CD4-positive, alpha-beta memory T cell (primary cell): ENCODE measurements at regions of chr7 and their contacts with region 1.

Region 1: DNA sequence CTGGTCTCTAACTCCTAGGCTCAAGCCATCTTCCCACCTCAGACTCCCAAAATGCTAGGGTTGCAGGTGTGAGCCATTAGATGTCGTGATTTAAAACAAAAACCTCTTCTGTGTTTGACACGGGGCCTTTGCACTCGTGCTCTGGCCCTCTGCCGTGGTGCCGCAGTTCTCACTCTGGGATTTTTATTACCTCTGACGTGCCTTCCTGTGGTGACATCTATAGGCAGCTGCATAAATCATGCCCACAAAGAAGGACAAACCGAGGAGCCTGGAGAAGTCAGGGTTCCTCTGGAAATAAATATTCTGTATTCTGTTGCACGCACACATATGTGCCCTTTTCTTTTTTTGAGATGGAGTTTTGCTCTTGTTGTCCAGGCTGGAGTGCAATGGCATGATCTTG is 25.9 kb upstream of the OCM start:
- DNase-seq: no peak
- H3K4me3 ChIP-seq: no peak overlapping the region
- H3K4me3 Mint-ChIP-seq: no peak overlapping the region
- H3K27ac ChIP-seq: no peak overlapping the region
- H3K27ac Mint-ChIP-seq: peak overlapping the region in 3 of 7 donors; percentile 42 to 61 (median 55)
- H3K4me1 ChIP-seq: peaks cover 11% of the 10 kb centered on the region
- H3K4me1 Mint-ChIP-seq: peaks cover 12 to 30% (median 20%) of the 10 kb centered on the region in 4 donors
- H3K27me3 ChIP-seq: no peaks in the 10 kb centered on the region
- H3K27me3 Mint-ChIP-seq: no peaks in the 10 kb centered on the region

Region 2: DNA sequence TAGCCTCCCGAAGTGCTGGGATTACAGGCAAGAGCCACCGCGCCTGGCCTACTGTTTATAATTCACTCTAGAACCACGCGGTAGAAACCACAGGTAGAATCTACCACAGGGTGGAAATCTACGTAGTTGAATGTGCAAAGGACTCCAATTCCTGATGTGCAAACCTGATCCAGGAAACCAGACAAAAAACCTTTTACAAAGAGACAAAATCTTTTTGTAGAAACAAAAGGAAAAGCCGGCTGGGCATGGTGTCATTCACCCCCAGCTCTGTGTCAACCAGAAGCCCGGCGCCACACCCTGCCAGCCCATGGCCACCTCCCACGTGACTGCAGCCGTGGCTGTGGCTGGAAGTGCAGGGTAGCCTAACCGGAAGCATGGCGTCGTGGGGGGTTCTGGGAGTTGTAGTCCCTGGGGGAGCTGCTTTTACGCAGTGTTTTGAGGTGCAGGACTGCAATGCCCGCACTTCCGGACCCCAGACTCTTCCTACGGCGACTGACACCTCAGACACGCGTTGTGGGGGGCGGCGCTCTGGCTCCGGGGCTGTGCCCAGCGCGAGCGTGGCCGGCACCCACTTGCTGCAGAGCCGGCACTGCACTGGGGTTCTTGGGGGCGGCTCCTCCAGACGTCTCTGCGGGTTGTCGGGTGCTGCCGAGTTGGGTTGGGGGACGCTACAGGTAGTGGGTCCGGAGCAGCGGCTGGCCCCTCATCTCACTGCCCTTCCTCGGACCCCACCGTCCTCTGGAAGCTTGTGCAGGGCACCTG is 31.8 kb before region 1 on chr7:
- CTCF ChIA-PET with region 1: interaction called, 16 read pairs
- POLR2A ChIA-PET with region 1: interaction called, 5 read pairs
- intact Hi-C with region 1: no loop called
- DNase-seq: peak; percentile 98 to 100 (median 99)
- H3K4me3 ChIP-seq: peak overlapping the region; percentile 79 to 88
- H3K4me3 Mint-ChIP-seq: peak overlapping the region; percentile 84 to 95 (median 91)
- H3K27ac ChIP-seq: peak overlapping the region; percentile 79
- H3K27ac Mint-ChIP-seq: peak overlapping the region; percentile 81 to 98 (median 93)
- H3K4me1 ChIP-seq: peaks cover 33% of the 10 kb centered on the region
- H3K4me1 Mint-ChIP-seq: peaks cover 13 to 42% (median 27%) of the 10 kb centered on the region in 4 donors
- H3K27me3 ChIP-seq: no peaks in the 10 kb centered on the region
- H3K27me3 Mint-ChIP-seq: no peaks in the 10 kb centered on the region

Region 3: DNA sequence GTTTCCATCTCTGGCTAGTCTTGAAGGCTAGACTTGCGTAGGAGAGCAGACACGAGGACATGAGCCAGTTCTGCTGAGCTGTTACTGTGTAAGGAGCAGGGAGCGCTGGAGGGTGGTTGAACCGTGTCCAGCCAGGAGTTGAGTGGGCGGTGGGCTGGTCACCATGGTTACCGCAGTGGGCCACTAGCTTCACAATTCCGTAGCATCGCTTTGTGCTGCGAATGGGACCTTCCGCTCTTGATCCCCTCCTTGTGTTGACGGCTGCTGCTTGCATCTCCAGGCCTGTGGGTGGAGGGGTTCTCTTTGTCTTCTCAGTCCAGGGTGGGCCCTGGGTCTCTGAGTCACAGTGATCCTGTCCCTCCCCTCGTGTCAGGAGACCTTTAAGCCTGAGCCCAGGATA is 23.5 kb before region 1 on chr7:
- CTCF ChIA-PET with region 1: interaction called, 20 read pairs
- POLR2A ChIA-PET with region 1: interaction called, 6 read pairs
- intact Hi-C with region 1: no loop called
- DNase-seq: no peak
- H3K4me3 ChIP-seq: no peak overlapping the region
- H3K4me3 Mint-ChIP-seq: peak overlapping the region in 1 of 8 donors; percentile 15
- H3K27ac ChIP-seq: no peak overlapping the region
- H3K27ac Mint-ChIP-seq: peak overlapping the region in 6 of 7 donors; percentile 51 to 88 (median 81)
- H3K4me1 ChIP-seq: peaks cover 51% of the 10 kb centered on the region
- H3K4me1 Mint-ChIP-seq: peaks cover 26 to 56% (median 42%) of the 10 kb centered on the region in 4 donors
- H3K27me3 ChIP-seq: no peaks in the 10 kb centered on the region
- H3K27me3 Mint-ChIP-seq: no peaks in the 10 kb centered on the region

Region 4: GRCh38 chr7:5838761-5839500 is 15.8 kb before region 1 on chr7:
- CTCF ChIA-PET with region 1: interaction called, 20 read pairs
- POLR2A ChIA-PET with region 1: interaction called, 11 read pairs
- intact Hi-C with region 1: no loop called
- DNase-seq: no peak
- H3K4me3 ChIP-seq: no peak overlapping the region
- H3K4me3 Mint-ChIP-seq: peak overlapping the region; percentile 35 to 84 (median 58)
- H3K27ac ChIP-seq: no peak overlapping the region
- H3K27ac Mint-ChIP-seq: peak overlapping the region; percentile 31 to 96 (median 85)
- H3K4me1 ChIP-seq: peaks cover 40% of the 10 kb centered on the region
- H3K4me1 Mint-ChIP-seq: peaks cover 23 to 40% (median 27%) of the 10 kb centered on the region in 4 donors
- H3K27me3 ChIP-seq: no peaks in the 10 kb centered on the region
- H3K27me3 Mint-ChIP-seq: no peaks in the 10 kb centered on the region

Region 5: DNA sequence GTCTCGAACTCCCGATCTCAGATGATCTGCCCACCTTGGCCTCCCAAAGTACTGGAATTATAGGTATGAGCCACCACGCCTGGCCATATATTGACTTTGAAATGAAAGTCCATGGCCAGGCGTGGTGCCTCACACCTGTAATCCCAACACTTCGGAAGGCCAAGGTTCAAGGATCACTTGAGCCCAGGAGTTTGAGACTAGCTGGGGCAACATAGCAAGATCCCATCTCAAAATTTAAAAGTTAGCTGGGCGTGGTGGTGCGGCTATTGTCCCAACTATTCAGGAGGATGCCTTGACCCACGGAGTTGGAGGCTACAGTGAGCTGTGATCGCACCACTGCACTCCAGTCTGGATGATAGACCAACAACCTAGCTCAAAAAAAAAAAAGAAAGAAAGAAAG is 37.8 kb after region 1 on chr7:
- CTCF ChIA-PET with region 1: no interaction called
- POLR2A ChIA-PET with region 1: no interaction called
- intact Hi-C with region 1: no loop called
- DNase-seq: no peak
- H3K4me3 ChIP-seq: no peak overlapping the region
- H3K4me3 Mint-ChIP-seq: no peak overlapping the region
- H3K27ac ChIP-seq: no peak overlapping the region
- H3K27ac Mint-ChIP-seq: no peak overlapping the region
- H3K4me1 ChIP-seq: no peaks in the 10 kb centered on the region
- H3K4me1 Mint-ChIP-seq: peaks cover 0 to under 1% (median 0%) of the 10 kb centered on the region in 4 donors
- H3K27me3 ChIP-seq: no peaks in the 10 kb centered on the region
- H3K27me3 Mint-ChIP-seq: no peaks in the 10 kb centered on the region

Region 6: DNA sequence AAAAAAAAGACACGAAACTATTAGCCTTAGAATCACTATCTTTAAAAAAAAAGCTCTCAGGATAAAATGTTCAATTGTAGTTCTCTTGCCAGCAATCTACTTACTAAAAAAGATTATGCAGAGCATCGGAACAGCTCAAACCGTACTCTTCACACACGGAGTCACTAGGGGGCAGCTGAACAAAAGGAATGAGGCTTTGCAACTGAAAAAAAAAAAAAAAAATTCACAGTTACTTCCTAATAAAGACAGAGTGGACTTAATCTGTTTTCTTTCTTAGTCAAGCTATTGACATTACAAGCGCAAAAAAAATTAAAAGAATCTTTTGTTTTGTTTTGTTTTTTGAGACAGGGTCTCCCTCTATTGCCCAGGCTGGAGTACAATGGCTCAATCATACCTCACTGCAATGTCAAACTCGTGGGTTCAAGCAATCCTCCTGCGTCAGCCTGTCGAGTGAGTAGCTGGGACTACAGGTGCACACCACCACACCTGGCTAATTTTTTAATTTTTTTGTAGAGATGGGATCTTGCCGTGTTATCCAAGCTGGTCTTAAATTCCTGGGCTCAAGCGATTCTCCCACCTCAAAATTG is 142.6 kb after region 1 on chr7:
- CTCF ChIA-PET with region 1: interaction called, 5 read pairs
- POLR2A ChIA-PET with region 1: no interaction called
- intact Hi-C with region 1: loop called (anchors 10 kb)
- DNase-seq: peak in 4 of 5 donors; percentile 57 to 61 (median 58)
- H3K4me3 ChIP-seq: no peak overlapping the region
- H3K4me3 Mint-ChIP-seq: no peak overlapping the region
- H3K27ac ChIP-seq: no peak overlapping the region
- H3K27ac Mint-ChIP-seq: peak overlapping the region in 1 of 7 donors; percentile 48
- H3K4me1 ChIP-seq: no peaks in the 10 kb centered on the region
- H3K4me1 Mint-ChIP-seq: peaks cover 0 to 1% (median 0%) of the 10 kb centered on the region in 4 donors
- H3K27me3 ChIP-seq: no peaks in the 10 kb centered on the region
- H3K27me3 Mint-ChIP-seq: no peaks in the 10 kb centered on the region

Region 7: DNA sequence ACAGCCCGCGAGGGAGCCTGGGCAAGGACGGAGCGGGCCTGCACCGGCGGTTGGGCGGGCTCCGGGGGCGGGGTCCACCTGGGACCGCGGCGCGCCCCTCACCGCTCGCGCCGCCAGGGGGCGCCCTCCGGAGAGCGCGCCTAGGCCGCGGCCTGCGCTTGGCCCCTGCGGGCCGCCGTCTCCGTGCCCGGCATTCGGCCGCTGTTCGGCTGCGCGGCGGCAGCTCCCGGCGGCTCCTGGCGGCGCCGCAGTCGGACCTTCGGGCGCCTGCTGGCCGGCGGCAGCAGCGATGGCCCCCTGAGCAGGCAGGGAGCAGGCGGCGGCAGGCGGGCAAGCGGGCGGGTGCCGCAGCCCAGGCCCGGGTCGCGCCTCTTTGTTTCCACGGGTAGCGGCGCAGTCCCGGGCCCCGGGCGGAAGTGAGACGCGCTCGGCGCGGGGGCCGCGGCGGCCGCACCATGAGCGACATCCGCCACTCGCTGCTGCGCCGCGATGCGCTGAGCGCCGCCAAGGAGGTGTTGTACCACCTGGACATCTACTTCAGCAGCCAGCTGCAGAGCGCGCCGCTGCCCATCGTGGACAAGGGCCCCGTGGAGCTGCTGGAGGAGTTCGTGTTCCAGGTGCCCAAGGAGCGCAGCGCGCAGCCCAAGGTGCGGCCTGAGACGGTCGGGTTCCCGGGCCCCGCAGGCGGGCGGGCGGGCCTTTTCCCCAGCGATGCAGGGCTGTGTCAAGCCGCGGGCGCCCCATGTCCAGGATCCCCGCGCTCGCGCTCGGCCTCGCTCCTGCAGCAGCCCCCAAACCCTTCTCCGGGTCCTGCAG is 735.3 kb after region 1 on chr7 and contains the start of gene INTS15:
- CTCF ChIA-PET with region 1: no interaction called
- POLR2A ChIA-PET with region 1: no interaction called
- intact Hi-C with region 1: loop called (anchors 2 kb)
- DNase-seq: peak; percentile 81 to 93 (median 89)
- H3K4me3 ChIP-seq: peak within 1 kb of the TSS; percentile 34 to 92
- H3K4me3 Mint-ChIP-seq: peak within 1 kb of the TSS; percentile 89 to 93 (median 91)
- H3K27ac ChIP-seq: peak within 1 kb of the TSS; percentile 72
- H3K27ac Mint-ChIP-seq: peak within 1 kb of the TSS; percentile 89 to 98 (median 94)
- H3K4me1 ChIP-seq: peaks cover 23% of the 10 kb centered on the region
- H3K4me1 Mint-ChIP-seq: peaks cover 11 to 42% (median 20%) of the 10 kb centered on the region in 4 donors
- H3K27me3 ChIP-seq: no peaks in the 10 kb centered on the region
- H3K27me3 Mint-ChIP-seq: no peaks in the 10 kb centered on the region
- total RNA-seq, gene INTS15: 56.6 to 62.1 TPM

Region 8: GRCh38 chr7:6706677-6707544 is 852.2 kb after region 1 on chr7 and contains the start of gene ZNF12:
- CTCF ChIA-PET with region 1: no interaction called
- POLR2A ChIA-PET with region 1: no interaction called
- intact Hi-C with region 1: loop called (anchors 5 kb)
- DNase-seq: peak; percentile 92 to 94 (median 92)
- H3K4me3 ChIP-seq: peak within 1 kb of the TSS; percentile 59 to 71
- H3K4me3 Mint-ChIP-seq: peak within 1 kb of the TSS; percentile 90 to 96 (median 94)
- H3K27ac ChIP-seq: peak within 1 kb of the TSS; percentile 81
- H3K27ac Mint-ChIP-seq: peak within 1 kb of the TSS; percentile 90 to 95 (median 94)
- H3K4me1 ChIP-seq: peaks cover 39% of the 10 kb centered on the region
- H3K4me1 Mint-ChIP-seq: peaks cover 32 to 50% (median 40%) of the 10 kb centered on the region in 4 donors
- H3K27me3 ChIP-seq: no peaks in the 10 kb centered on the region
- H3K27me3 Mint-ChIP-seq: no peaks in the 10 kb centered on the region
- total RNA-seq, gene ZNF12: 48.0 to 49.6 TPM

Region 9: GRCh38 chr7:7221602-7222038 is 1366.9 kb after region 1 on chr7:
- CTCF ChIA-PET with region 1: no interaction called
- POLR2A ChIA-PET with region 1: no interaction called
- intact Hi-C with region 1: no loop called
- DNase-seq: no peak
- H3K4me3 ChIP-seq: no peak overlapping the region
- H3K4me3 Mint-ChIP-seq: no peak overlapping the region
- H3K27ac ChIP-seq: no peak overlapping the region
- H3K27ac Mint-ChIP-seq: peak overlapping the region in 3 of 7 donors; percentile 20 to 59 (median 50)
- H3K4me1 ChIP-seq: peaks cover 7% of the 10 kb centered on the region
- H3K4me1 Mint-ChIP-seq: peaks cover 26 to 42% (median 33%) of the 10 kb centered on the region in 4 donors
- H3K27me3 ChIP-seq: no peaks in the 10 kb centered on the region
- H3K27me3 Mint-ChIP-seq: no peaks in the 10 kb centered on the region